MCF 10A (cell line): ENCODE measurements at regions of chr4 and their contacts with region 1.

Region 1: DNA sequence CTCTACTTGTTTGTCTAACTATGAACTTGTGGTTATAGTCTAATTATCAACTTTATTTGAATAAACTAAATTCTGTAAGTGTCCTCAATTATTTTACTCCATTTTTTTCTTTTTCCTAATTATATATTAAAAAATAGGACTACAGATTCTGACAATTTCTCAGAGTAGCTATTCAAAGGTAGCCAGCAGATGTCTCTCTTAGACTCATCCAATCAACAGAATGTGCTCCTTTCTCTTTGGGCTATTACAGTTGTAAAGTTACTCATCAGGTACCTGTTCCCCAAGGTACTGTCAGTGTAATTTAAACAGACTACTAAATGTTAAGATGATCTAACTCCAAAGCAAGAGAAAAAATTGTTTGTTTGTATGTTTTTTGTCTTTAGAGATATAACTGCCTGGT is 248.6 kb downstream of the PCDH18 start:
- DNase-seq: peak; percentile 14
- H3K4me3 Mint-ChIP-seq: no peak overlapping the region
- H3K27ac Mint-ChIP-seq: no peak overlapping the region
- H3K4me1 Mint-ChIP-seq: peaks cover 12% of the 10 kb centered on the region
- H3K27me3 Mint-ChIP-seq: no peaks in the 10 kb centered on the region
- CTCF ChIP-seq: peak; percentile 47

Region 2: GRCh38 chr4:137124278-137124932 is 159.3 kb before region 1 on chr4:
- CTCF ChIA-PET with region 1: interaction called, 3 read pairs
- POLR2A ChIA-PET with region 1: no interaction called
- intact Hi-C with region 1: loop called (anchors 1 kb)
- DNase-seq: peak; percentile 77
- H3K4me3 Mint-ChIP-seq: peak overlapping the region; percentile 72
- H3K27ac Mint-ChIP-seq: peak overlapping the region; percentile 41
- H3K4me1 Mint-ChIP-seq: peaks cover 5% of the 10 kb centered on the region
- H3K27me3 Mint-ChIP-seq: no peaks in the 10 kb centered on the region
- CTCF ChIP-seq: peak; percentile 60

Region 3: GRCh38 chr4:137531986-137532868 is 248.5 kb after region 1 on chr4 and contains the start of gene PCDH18:
- CTCF ChIA-PET with region 1: no interaction called
- POLR2A ChIA-PET with region 1: no interaction called
- intact Hi-C with region 1: loop called (anchors 1 kb)
- DNase-seq: peak; percentile 64
- H3K4me3 Mint-ChIP-seq: no peak within 1 kb of the TSS
- H3K27ac Mint-ChIP-seq: no peak within 1 kb of the TSS
- H3K4me1 Mint-ChIP-seq: no peaks in the 10 kb centered on the region
- H3K27me3 Mint-ChIP-seq: no peaks in the 10 kb centered on the region
- CTCF ChIP-seq: no peak
- total RNA-seq, gene PCDH18: 3.5 and 4.9 TPM in 2 replicates

Region 4: DNA sequence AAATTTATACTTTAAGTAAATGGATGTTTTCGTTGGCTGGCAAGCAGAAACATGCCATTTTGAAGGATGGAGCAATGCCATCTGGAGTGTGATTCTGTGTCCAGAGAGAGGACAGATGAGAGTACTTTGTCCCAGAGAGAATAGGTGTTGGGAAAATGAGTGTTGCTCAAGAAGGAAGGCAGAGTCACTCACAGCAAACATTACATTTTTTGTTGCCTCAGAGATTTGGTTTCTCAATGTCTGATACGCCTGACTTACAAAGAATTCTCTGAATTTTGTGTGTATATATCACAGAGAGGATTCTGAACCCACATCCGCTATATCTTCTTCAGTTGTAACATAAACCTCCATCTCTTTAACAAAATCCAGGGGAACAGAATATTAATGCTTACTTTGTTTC is 351.4 kb after region 1 on chr4:
- CTCF ChIA-PET with region 1: no interaction called
- POLR2A ChIA-PET with region 1: no interaction called
- intact Hi-C with region 1: loop called (anchors 10 kb)
- DNase-seq: peak; percentile 93
- H3K4me3 Mint-ChIP-seq: peak overlapping the region; percentile 61
- H3K27ac Mint-ChIP-seq: peak overlapping the region; percentile 97
- H3K4me1 Mint-ChIP-seq: peaks cover 16% of the 10 kb centered on the region
- H3K27me3 Mint-ChIP-seq: no peaks in the 10 kb centered on the region
- CTCF ChIP-seq: no peak

Region 5: GRCh38 chr4:137861682-137862081 is 577.9 kb after region 1 on chr4:
- CTCF ChIA-PET with region 1: interaction called, 3 read pairs
- POLR2A ChIA-PET with region 1: no interaction called
- intact Hi-C with region 1: loop called (anchors 1 kb)
- DNase-seq: peak; percentile 22
- H3K4me3 Mint-ChIP-seq: no peak overlapping the region
- H3K27ac Mint-ChIP-seq: no peak overlapping the region
- H3K4me1 Mint-ChIP-seq: no peaks in the 10 kb centered on the region
- H3K27me3 Mint-ChIP-seq: no peaks in the 10 kb centered on the region
- CTCF ChIP-seq: peak; percentile 47